Activated T-helper 2 cell treated with anti-CD3 and anti-CD28 coated beads, Interferon-gamma antibody, Interleukin-2, Interleukin-4, amounts not matched to agents 10 μg/mL and 5 μg/mL and 100 μg/mL, durations not matched to agents 14 hours and 24 hours and 36 hours (primary cell): ENCODE measurements at regions of chr11 and their contacts with region 1.

Region 1: DNA sequence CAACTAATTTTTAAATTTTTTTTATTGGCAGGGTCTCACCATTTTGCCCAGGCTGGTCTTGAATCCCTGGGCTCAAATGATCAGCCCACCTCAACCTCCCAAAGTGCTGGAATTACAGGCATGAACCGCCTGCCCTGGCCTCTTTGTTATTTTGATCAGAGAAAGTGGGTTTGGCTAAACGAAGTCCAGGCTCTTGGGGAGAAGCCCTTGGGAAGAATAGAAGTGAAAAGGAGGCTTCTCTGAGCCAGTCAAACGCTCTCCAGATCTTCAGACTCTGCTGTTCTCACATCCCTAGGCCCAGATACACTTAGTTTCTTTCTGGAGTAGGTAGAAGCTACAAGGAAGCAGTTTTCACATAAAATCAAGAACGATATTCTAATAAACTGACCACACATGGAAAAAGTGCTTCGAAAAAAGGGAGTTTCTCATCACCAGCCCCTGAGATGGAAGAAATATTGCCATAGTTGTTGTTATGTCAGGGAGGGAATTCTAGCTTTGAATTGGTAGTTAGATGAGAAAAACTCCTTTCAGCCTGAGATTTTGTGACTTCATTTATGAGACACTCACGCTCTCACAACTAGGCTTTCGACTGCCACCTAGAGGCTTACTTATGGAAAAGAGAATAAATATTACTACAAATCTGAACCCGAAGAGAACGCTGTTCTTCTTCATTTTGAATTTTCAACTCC is 41.7 kb upstream of the AQP11 start:
- DNase-seq: no peak
- H3K4me3 Mint-ChIP-seq: no peak overlapping the region
- H3K27ac Mint-ChIP-seq: no peak overlapping the region
- H3K4me1 Mint-ChIP-seq: peaks cover 6% of the 10 kb centered on the region
- H3K27me3 Mint-ChIP-seq: no peaks in the 10 kb centered on the region

Region 2: DNA sequence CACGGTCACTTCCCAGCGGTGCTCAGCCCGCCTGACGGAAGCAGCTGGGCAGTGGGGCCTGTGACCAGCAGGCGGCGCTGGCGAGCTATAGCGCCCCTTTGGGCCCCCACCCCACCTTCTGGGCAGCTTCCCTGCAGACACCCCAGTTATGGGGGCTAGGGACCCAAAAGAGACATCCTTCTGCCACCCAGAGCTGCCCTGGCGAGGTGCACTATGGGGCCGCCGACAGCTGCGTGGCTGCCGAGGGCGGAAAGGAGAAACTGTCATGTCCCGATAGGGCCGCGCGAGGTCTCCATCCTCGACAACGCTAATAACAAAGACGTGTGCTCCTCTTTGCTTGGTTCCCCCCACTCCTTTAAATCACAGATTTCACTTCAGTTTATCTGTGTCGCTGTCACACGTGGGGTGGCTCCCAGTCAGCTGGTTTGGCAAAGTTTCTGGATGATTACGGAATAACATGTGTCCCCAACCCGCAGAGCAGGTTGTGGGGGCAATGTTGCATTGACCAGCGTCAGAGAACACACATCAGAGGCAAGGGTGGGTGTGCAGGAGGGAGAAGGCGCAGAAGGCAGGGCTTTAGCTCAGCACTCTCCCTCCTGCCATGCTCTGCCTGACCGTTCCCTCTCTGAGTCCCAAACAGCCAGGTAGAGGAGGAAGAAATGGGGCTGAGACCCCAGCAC is 420.6 kb before region 1 on chr11:
- intact Hi-C with region 1: loop called (anchors 1 kb)
- DNase-seq: peak; percentile 31
- H3K4me3 Mint-ChIP-seq: peak overlapping the region; percentile 49
- H3K27ac Mint-ChIP-seq: no peak overlapping the region
- H3K4me1 Mint-ChIP-seq: no peaks in the 10 kb centered on the region
- H3K27me3 Mint-ChIP-seq: peaks cover 5% of the 10 kb centered on the region